ENCODE measurements at regions of chr18 and their contacts with region 1.

Region 1: GRCh38 chr18:477565-477964 is 22.9 kb downstream of the COLEC12 start:
- DNase-seq: no peak
- H3K4me3 ChIP-seq: no peak overlapping the region
- H3K27ac ChIP-seq: no peak overlapping the region
- H3K4me1 ChIP-seq: peaks cover 12% of the 10 kb centered on the region
- H3K27me3 ChIP-seq: no peaks in the 10 kb centered on the region
- CTCF ChIP-seq: peak; percentile 10 to 13
- POLR2A ChIP-seq: no peak

Region 2: GRCh38 chr18:427005-427404 is 50.6 kb before region 1 on chr18:
- CTCF ChIA-PET with region 1: interaction called, 4 read pairs
- POLR2A ChIA-PET with region 1: no interaction called
- dilution Hi-C with region 1: no loop called
- intact Hi-C with region 1: loop called (anchors 1 kb)
- DNase-seq: no peak
- H3K4me3 ChIP-seq: no peak overlapping the region
- H3K27ac ChIP-seq: no peak overlapping the region
- H3K4me1 ChIP-seq: peaks cover 23% of the 10 kb centered on the region
- H3K27me3 ChIP-seq: no peaks in the 10 kb centered on the region
- CTCF ChIP-seq: no peak
- POLR2A ChIP-seq: no peak

Region 3: GRCh38 chr18:457140-457519 is 20.4 kb before region 1 on chr18:
- CTCF ChIA-PET with region 1: interaction called, 4 read pairs
- POLR2A ChIA-PET with region 1: no interaction called
- dilution Hi-C with region 1: no loop called
- intact Hi-C with region 1: loop called (anchors 1 kb)
- DNase-seq: peak; percentile 80
- H3K4me3 ChIP-seq: no peak overlapping the region
- H3K27ac ChIP-seq: no peak overlapping the region
- H3K4me1 ChIP-seq: peaks cover 15% of the 10 kb centered on the region
- H3K27me3 ChIP-seq: peaks cover 0 to 2% of the 10 kb centered on the region in 2 experiments
- CTCF ChIP-seq: no peak
- POLR2A ChIP-seq: no peak

Region 4: GRCh38 chr18:499551-500408 is 22.2 kb after region 1 on chr18:
- CTCF ChIA-PET with region 1: interaction called, 3 read pairs
- POLR2A ChIA-PET with region 1: no interaction called
- dilution Hi-C with region 1: no loop called
- intact Hi-C with region 1: loop called (anchors 1 kb)
- DNase-seq: peak; percentile 57
- H3K4me3 ChIP-seq: peak overlapping the region; percentile 5 to 58 (median 38)
- H3K27ac ChIP-seq: no peak overlapping the region
- H3K4me1 ChIP-seq: peaks cover 13% of the 10 kb centered on the region
- H3K27me3 ChIP-seq: peaks cover 3 to 15% of the 10 kb centered on the region in 2 experiments
- CTCF ChIP-seq: peak in 1 of 2 donors; percentile 13
- POLR2A ChIP-seq: no peak

Region 5: DNA sequence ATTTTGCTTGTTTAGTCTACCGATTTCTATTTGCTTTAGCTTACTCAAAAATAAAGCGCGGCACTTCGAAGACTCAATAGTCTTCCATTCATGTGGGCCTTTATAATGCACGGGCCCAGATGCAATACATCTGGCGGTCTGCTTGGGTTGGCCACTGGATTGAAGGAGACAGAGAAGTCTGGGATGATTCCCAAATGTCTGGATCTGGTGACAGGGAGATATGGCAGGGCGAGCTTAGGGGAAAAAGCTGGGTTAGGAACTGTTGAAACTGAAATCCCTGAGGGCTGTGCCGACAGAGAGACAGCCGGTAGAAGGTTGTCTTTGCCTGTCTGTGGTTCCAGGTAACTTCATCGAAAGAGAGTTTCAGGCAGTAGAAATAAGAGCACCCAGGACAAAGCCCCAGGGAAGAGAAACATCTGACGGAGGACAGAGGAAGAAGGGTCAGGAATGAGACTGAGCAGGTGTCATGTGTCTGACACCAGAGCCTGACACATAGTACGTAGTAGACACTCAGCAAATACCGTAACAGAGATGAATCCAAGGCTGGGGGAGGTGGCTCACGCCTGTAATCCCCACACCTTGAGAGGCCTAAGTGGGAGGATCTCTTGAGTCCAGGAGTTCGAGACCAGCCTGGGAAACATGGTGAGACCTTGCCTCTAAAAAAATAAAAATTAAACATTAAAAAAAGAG is 132.8 kb after region 1 on chr18:
- CTCF ChIA-PET with region 1: no interaction called
- POLR2A ChIA-PET with region 1: no interaction called
- dilution Hi-C with region 1: no loop called
- intact Hi-C with region 1: loop called (anchors 5 kb)
- DNase-seq: no peak
- H3K4me3 ChIP-seq: no peak overlapping the region
- H3K27ac ChIP-seq: no peak overlapping the region
- H3K4me1 ChIP-seq: no peaks in the 10 kb centered on the region
- H3K27me3 ChIP-seq: peaks cover 0 to 2% of the 10 kb centered on the region in 2 experiments
- CTCF ChIP-seq: no peak
- POLR2A ChIP-seq: no peak

Region 6: GRCh38 chr18:629269-630150 is 151.9 kb after region 1 on chr18:
- CTCF ChIA-PET with region 1: no interaction called
- POLR2A ChIA-PET with region 1: no interaction called
- dilution Hi-C with region 1: no loop called
- intact Hi-C with region 1: no loop called
- DNase-seq: no peak
- H3K4me3 ChIP-seq: no peak overlapping the region
- H3K27ac ChIP-seq: no peak overlapping the region
- H3K4me1 ChIP-seq: peaks cover 1% of the 10 kb centered on the region
- H3K27me3 ChIP-seq: peaks cover 0 to 2% of the 10 kb centered on the region in 2 experiments
- CTCF ChIP-seq: peak in 1 of 2 donors; percentile 4
- POLR2A ChIP-seq: no peak